H1 (cell line): ENCODE measurements at regions of chr14 and their contacts with region 1.

Region 1: DNA sequence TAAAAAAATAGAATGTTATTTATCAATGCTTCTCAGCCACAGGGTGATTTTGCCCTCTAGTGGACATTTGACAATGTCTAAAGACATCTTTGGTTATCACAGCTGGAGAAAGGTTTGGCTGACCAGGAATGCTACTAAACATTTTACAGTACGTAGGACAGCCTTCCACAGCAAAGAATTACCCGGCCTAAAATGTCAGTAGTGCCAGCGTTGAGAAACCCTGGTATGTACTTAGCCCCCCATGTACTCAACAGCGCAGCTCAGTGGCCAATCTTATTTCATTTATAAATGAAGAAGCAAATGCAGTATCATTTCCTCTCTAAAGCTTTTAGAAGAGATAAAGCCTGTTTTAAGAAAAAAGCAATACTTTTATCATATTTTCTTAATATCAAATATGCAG is 5.8 kb downstream of the MARK3 start:
- DNase-seq: no peak
- H3K4me3 ChIP-seq: no peak overlapping the region
- H3K27ac ChIP-seq: no peak overlapping the region
- H3K4me1 ChIP-seq: peaks cover 0 to 6% (median 0%) of the 10 kb centered on the region in 4 experiments; a peak in 1 of 7 replicates
- H3K27me3 ChIP-seq: no peaks in the 10 kb centered on the region
- CTCF ChIP-seq: peak in 1 of 3 experiments; percentile 34; a peak in 2 of 4 replicates
- EP300 ChIP-seq: no peak
- POLR2A ChIP-seq: no peak
- RAD21 ChIP-seq: peak; percentile 16 to 35; a peak in 2 of 4 replicates

Region 2: DNA sequence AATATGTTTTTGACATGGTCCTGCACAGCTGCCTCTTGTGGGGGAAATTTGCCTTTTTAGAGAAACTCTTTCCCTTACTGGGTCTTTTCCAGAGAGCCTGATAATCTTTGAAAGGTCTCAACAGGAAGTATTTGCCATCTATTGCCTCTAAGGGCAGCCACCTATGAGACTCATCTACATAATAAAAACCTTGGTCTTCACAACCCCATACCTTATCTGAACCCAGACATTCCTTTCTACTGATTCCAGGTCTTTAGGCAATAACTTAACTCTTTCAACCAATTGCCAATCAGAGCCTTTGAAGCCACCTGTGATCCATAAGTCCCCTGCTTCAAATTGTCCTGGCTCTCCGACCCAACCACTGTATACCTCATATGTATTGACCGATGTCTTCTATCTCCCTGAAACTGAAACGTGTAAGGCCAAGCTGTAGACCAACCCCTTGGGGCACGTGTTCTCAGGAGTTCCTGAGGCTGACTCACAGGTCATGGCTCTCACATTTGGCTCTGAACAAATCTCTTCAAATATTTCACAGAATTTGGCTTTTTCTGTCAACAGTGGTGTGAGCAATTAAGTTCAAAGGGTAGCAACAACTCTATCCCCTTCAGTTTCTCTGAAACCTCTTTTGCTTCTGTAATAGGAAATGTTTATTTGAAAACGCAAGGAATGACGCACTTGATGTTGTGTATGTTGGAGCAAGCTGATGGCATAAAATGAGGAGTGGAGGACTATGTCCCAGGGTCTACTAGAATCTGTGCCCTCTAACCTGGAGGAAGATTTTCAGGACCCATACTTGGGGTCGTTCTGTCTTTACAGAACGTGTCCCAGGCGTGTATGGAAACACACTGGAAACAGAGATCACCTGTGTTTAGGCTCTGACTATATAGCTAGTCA is 106.2 kb before region 1 on chr14:
- CTCF ChIA-PET with region 1: no interaction called
- POLR2A ChIA-PET with region 1: no interaction called
- DNase-seq: no peak
- H3K4me3 ChIP-seq: no peak overlapping the region
- H3K27ac ChIP-seq: no peak overlapping the region
- H3K4me1 ChIP-seq: peaks cover 5 to 25% (median 16%) of the 10 kb centered on the region in 4 experiments
- H3K27me3 ChIP-seq: peaks cover 0 to 3% (median under 1%) of the 10 kb centered on the region in 4 experiments; a peak in 3 of 7 replicates
- CTCF ChIP-seq: no peak
- EP300 ChIP-seq: no peak
- POLR2A ChIP-seq: no peak
- RAD21 ChIP-seq: no peak

Region 3: GRCh38 chr14:103378038-103378854 is 12.8 kb before region 1 on chr14:
- CTCF ChIA-PET with region 1: interaction called, 22 read pairs
- POLR2A ChIA-PET with region 1: interaction called, 6 read pairs
- DNase-seq: no peak
- H3K4me3 ChIP-seq: no peak overlapping the region
- H3K27ac ChIP-seq: no peak overlapping the region
- H3K4me1 ChIP-seq: no peaks in the 10 kb centered on the region
- H3K27me3 ChIP-seq: 0 out of 7 replicates have a peak, but pooled peaks cover 0 to 4% (median 0%) of the 10 kb centered on the region in 4 experiments
- CTCF ChIP-seq: no peak
- EP300 ChIP-seq: no peak
- POLR2A ChIP-seq: no peak
- RAD21 ChIP-seq: no peak

Region 4: DNA sequence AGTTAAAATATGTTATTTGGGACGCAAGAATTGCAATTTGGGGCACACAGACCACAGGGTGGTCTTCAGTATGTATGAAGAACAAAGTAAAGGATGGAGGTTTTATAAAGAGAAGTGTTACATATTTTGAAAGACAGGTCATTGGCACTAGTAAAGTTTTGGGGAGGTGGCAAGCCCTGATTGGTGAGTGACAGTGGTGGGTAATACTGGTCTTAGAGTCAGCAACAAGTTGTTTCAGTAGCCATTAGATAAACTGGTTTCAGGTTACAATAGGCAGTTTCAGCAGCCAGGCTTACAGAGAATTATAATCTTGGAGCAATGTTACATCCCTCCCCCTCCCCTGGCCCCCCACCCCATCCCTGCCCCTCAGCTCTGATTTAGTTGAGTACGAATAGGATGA is 11.6 kb after region 1 on chr14:
- CTCF ChIA-PET with region 1: interaction called, 34 read pairs
- POLR2A ChIA-PET with region 1: interaction called, 3 read pairs
- DNase-seq: no peak
- H3K4me3 ChIP-seq: no peak overlapping the region
- H3K27ac ChIP-seq: no peak overlapping the region
- H3K4me1 ChIP-seq: peaks cover 1 to 10% (median 4%) of the 10 kb centered on the region in 4 experiments; a peak in 4 of 7 replicates
- H3K27me3 ChIP-seq: no peaks in the 10 kb centered on the region
- CTCF ChIP-seq: no peak
- EP300 ChIP-seq: no peak
- POLR2A ChIP-seq: no peak
- RAD21 ChIP-seq: no peak

Region 5: GRCh38 chr14:103416916-103417315 is 25.9 kb after region 1 on chr14:
- CTCF ChIA-PET with region 1: interaction called, 17 read pairs
- POLR2A ChIA-PET with region 1: interaction called, 4 read pairs
- DNase-seq: no peak
- H3K4me3 ChIP-seq: no peak overlapping the region
- H3K27ac ChIP-seq: no peak overlapping the region
- H3K4me1 ChIP-seq: peaks cover 2 to 11% (median 7%) of the 10 kb centered on the region in 4 experiments
- H3K27me3 ChIP-seq: no peaks in the 10 kb centered on the region
- CTCF ChIP-seq: no peak
- EP300 ChIP-seq: no peak
- POLR2A ChIP-seq: no peak
- RAD21 ChIP-seq: no peak